ENCODE measurements at regions of chr1 and their contacts with region 1.

Region 1: DNA sequence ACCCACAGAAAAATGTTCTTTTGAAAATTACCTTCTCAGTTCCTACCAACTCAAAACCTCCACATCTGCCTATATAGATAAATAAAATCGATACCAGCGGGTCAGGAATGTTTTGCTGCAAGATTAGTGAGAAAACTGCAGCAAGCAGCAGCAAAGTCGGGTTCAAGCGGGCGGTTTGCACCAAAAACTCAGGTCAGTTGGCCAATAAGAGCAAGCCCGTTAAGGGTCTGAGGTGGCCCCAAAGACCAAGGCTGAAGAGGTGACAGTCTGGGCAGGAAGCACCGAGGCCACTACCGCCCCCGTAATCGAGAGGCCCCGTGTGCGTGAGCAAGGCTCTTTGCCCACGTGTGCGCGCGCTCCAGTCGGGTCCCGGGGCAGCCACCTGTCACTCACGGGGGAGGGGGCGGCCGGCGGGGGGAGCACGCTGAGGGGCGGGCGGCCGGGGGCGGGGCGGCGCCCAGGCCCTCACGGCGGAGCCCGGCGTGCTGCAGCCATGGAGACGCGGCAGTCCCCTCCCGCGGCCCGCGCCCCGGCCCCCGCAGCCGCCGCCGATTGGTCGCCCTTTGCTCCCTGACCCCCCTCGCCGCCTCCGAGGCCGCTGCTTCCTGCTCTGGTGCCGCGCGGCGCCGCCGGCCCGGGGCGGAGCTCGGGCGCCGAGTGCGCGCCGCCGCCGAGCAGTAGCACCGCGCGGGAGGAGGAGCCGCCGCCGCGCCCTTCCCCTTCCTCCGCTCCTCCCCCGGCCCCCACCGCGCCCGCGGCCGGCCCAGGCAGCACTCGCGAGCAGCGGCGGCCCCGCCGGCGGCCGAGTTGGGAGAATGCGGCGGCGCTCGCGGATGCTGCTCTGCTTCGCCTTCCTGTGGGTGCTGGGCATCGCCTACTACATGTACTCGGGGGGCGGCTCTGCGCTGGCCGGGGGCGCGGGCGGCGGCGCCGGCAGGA is at the start of gene GALNT2:
- DNase-seq: peak; percentile 88
- ATAC-seq: peak; percentile 88
- H3K4me3 Mint-ChIP-seq: peak within 1 kb of the TSS; percentile 95
- H3K27ac Mint-ChIP-seq: peak within 1 kb of the TSS; percentile 92
- H3K4me1 Mint-ChIP-seq: peaks cover 46% of the 10 kb centered on the region
- H3K27me3 Mint-ChIP-seq: no peaks in the 10 kb centered on the region
- CTCF ChIP-seq: no peak
- total RNA-seq, gene GALNT2: 99.8 and 108 TPM in 2 replicates

Region 2: DNA sequence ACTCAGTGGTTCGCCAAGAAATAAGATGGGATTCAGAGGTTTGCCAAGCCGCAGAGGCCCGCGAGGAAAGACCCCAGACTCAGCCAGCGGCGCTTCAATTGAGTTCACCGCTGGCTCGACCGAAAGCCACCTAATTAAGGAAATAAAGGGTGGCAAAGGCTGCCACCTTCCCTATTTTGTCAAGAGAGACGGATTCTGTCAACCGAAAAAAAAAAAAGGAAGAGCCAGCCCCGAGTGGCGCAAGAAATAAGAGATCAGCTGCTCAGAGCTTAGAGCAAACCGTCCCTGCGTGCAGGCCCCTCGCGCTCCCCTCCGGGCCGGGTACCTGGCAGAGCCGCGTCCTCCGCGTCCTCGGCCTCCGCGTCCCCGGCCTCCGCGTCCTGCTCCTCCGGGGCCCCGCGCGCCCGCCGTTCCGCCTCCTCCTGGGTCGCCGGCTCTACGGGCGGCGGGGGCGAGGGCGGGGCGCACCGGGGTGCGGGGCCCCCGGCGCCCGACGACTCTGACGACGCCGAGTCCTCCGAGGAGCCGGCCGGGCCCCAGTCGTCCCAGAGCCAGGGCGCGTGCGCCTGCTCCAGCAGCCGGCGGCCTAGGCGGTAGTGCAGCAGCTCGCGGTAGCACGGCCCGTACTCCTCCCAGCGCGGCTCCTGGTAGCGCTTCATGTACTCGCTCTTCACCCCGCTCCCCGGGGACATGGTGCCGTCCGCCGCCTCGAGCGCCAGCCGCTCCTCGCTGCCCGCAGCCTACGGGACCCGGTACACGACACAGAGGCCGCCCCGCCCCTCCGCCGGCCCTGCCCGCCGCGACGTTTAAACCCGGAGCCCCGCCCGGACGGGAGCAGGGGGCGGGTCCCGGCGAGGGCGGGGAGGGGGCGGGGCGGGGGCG is 724.7 kb before region 1 on chr1:
- CTCF ChIA-PET with region 1: no interaction called
- POLR2A ChIA-PET with region 1: no interaction called
- intact Hi-C with region 1: loop called (anchors 2 kb)
- DNase-seq: peak; percentile 85
- ATAC-seq: peak; percentile 82
- H3K4me3 Mint-ChIP-seq: peak overlapping the region; percentile 91
- H3K27ac Mint-ChIP-seq: peak overlapping the region; percentile 80
- H3K4me1 Mint-ChIP-seq: peaks cover 38% of the 10 kb centered on the region
- H3K27me3 Mint-ChIP-seq: peaks cover 8% of the 10 kb centered on the region
- CTCF ChIP-seq: no peak

Region 3: GRCh38 chr1:229661022-229661877 is 405.5 kb before region 1 on chr1:
- CTCF ChIA-PET with region 1: interaction called, 5 read pairs
- POLR2A ChIA-PET with region 1: interaction called, 3 read pairs
- intact Hi-C with region 1: loop called (anchors 1 kb)
- DNase-seq: peak; percentile 70
- ATAC-seq: peak; percentile 87
- H3K4me3 Mint-ChIP-seq: no peak overlapping the region
- H3K27ac Mint-ChIP-seq: peak overlapping the region; percentile 50
- H3K4me1 Mint-ChIP-seq: peaks cover 11% of the 10 kb centered on the region
- H3K27me3 Mint-ChIP-seq: no peaks in the 10 kb centered on the region
- CTCF ChIP-seq: peak; percentile 21

Region 4: DNA sequence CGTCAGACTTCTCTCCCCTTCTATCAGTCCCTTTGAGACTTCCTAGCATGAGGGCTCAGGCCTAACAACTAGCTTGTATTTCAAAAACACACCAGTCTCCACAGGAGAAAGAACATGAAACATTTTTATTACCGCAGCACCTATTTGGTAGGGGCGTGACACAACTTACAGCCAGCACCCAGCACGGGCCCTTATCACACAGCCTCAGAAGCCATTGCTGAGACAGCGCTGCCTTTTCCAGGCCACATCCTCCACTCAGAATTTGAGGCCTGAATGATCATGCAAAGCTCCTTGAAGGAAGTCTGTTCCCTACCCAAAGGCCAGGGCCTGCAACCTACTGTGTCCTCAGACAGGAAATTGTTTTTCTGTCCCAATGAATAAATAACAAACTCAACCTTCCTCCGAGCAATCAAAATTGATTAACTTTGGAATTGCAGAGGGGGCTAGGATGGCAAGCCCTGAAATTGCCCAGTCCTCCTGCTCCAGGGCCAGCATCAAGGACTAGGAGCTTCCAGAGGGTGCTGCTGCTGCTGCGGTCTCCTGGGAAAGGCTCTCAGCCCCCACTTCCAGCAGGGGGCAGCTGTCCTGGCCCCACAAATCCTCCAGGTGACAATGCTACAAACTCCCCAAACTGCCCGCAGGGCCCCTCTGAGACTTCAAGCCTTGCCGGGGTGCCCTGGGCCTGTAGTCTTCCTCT is 94.0 kb before region 1 on chr1:
- CTCF ChIA-PET with region 1: no interaction called
- POLR2A ChIA-PET with region 1: no interaction called
- intact Hi-C with region 1: no loop called
- DNase-seq: no peak
- ATAC-seq: no peak
- H3K4me3 Mint-ChIP-seq: no peak overlapping the region
- H3K27ac Mint-ChIP-seq: no peak overlapping the region
- H3K4me1 Mint-ChIP-seq: no peaks in the 10 kb centered on the region
- H3K27me3 Mint-ChIP-seq: no peaks in the 10 kb centered on the region
- CTCF ChIP-seq: no peak

Region 5: GRCh38 chr1:230109895-230110667 is 43.3 kb after region 1 on chr1:
- CTCF ChIA-PET with region 1: no interaction called
- POLR2A ChIA-PET with region 1: interaction called, 16 read pairs
- intact Hi-C with region 1: loop called (anchors 1 kb)
- DNase-seq: peak; percentile 56
- ATAC-seq: peak; percentile 87
- H3K4me3 Mint-ChIP-seq: peak overlapping the region; percentile 68
- H3K27ac Mint-ChIP-seq: peak overlapping the region; percentile 88
- H3K4me1 Mint-ChIP-seq: peaks cover 93% of the 10 kb centered on the region
- H3K27me3 Mint-ChIP-seq: no peaks in the 10 kb centered on the region
- CTCF ChIP-seq: no peak

Region 6: GRCh38 chr1:230167419-230167852 is 100.7 kb after region 1 on chr1:
- CTCF ChIA-PET with region 1: interaction called, 3 read pairs
- POLR2A ChIA-PET with region 1: no interaction called
- intact Hi-C with region 1: loop called (anchors 1 kb)
- DNase-seq: no peak
- ATAC-seq: peak; percentile 32
- H3K4me3 Mint-ChIP-seq: no peak overlapping the region
- H3K27ac Mint-ChIP-seq: peak overlapping the region; percentile 75
- H3K4me1 Mint-ChIP-seq: peaks cover 79% of the 10 kb centered on the region
- H3K27me3 Mint-ChIP-seq: no peaks in the 10 kb centered on the region
- CTCF ChIP-seq: no peak

Region 7: GRCh38 chr1:230328342-230329015 is 261.7 kb after region 1 on chr1:
- CTCF ChIA-PET with region 1: no interaction called
- POLR2A ChIA-PET with region 1: interaction called, 12 read pairs
- intact Hi-C with region 1: no loop called
- DNase-seq: no peak
- ATAC-seq: no peak
- H3K4me3 Mint-ChIP-seq: no peak overlapping the region
- H3K27ac Mint-ChIP-seq: no peak overlapping the region
- H3K4me1 Mint-ChIP-seq: peaks cover 6% of the 10 kb centered on the region
- H3K27me3 Mint-ChIP-seq: peaks cover 6% of the 10 kb centered on the region
- CTCF ChIP-seq: no peak

Measured in activated B cell treated with CpG ODN at 0.5 μM for 24 hours (primary cell).